Motor neuron (in vitro differentiated cells): ENCODE measurements at regions of chr1 and their contacts with region 1.

Region 1: GRCh38 chr1:18575620-18576019 is 55.0 kb upstream of the PAX7 start:
- ATAC-seq: peak; percentile 41 to 86 (median 62)
- H3K4me3 ChIP-seq: no peak overlapping the region
- H3K27ac ChIP-seq: no peak overlapping the region
- H3K4me1 ChIP-seq: peaks cover 0 to 16% of the 10 kb centered on the region in 2 donors

Region 2: GRCh38 chr1:17648457-17649145 is 927.0 kb before region 1 on chr1:
- in situ Hi-C with region 1: loop called in 5 of 9 experiments (anchors 10 to 25 kb)
- ATAC-seq: no peak
- H3K4me3 ChIP-seq: no peak overlapping the region
- H3K27ac ChIP-seq: no peak overlapping the region
- H3K4me1 ChIP-seq: peaks cover 10 to 17% of the 10 kb centered on the region in 2 donors